AG04450 (cell line): ENCODE measurements at regions of chr5 and their contacts with region 1.

Region 1: DNA sequence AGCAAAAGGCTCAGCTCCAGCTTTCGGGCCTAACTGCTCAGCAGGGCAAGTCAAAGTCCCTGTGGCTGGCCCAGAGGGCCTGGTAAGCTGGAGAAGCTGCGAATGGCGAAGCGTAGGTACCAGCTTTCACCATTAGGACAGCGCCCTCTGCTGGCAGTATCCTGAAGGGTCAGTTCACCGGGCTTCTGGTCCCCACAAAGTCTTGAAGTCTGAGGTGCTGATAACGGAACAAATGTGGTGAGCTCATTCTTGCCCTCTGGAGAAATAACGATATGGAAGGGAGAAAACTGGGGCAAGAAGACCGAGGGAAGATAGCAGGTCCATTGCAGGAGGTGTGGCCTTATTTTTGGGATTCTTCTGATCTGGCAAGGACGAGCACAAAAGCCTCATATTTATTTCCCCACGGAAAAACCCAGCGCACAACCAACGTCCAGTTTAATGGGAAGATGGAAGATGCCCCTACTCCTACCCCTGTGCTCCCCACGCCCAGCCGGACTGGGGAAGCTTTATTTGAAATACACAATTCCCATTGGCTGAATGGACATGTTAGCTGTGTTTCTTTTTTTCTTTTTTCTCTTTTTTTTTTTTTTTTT is 7.2 kb downstream of the SOWAHA start:
- DNase-seq: peak; percentile 85
- H3K4me3 ChIP-seq: no peak overlapping the region
- H3K27ac ChIP-seq: peak overlapping the region; percentile 39
- H3K27me3 ChIP-seq: no peaks in the 10 kb centered on the region
- CTCF ChIP-seq: peak; percentile 95

Region 2: GRCh38 chr5:132506094-132506692 is 314.1 kb before region 1 on chr5:
- CTCF ChIA-PET with region 1: interaction called, 14 read pairs
- POLR2A ChIA-PET with region 1: no interaction called
- DNase-seq: peak; percentile 96
- H3K4me3 ChIP-seq: peak overlapping the region; percentile 20
- H3K27ac ChIP-seq: peak overlapping the region; percentile 98
- H3K27me3 ChIP-seq: no peaks in the 10 kb centered on the region
- CTCF ChIP-seq: peak; percentile 85

Region 3: DNA sequence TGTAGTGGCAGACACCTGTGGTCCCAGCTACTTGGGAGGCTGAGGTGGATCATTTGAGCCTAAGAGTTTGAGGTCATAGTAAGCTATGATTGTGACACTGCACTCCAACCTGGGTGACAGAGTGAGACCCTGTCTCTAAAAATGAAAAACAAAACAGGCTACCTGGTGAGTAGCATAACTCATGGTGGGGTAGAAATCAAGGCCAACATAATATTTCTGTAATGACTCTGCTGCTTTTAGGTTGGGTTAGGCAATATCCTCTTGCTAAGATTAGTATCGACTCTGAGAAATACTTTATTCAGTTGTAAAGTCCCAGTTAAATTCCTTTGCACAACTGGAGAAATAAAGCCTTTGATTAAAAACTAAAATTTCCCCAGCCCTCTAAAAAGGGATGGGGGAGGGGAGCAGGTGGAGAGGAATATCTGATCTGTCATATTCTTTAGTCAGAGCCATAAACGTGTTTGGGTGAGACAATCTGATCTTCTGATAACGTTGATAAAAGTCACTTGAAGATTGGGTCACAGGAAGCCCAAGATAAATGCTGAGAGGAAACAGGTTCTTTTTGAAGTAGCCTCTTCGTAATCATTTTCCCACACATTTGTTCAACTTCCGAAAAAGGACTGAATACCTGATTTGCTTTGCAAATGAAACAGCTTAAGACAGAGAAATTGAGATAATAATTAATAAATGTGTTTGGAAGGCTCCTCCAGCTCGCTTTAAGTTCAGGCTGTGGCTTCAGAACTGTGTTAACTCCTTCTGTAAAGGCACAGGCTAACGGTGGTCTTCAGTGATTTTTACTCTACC is 131.5 kb before region 1 on chr5:
- CTCF ChIA-PET with region 1: interaction called, 13 read pairs
- POLR2A ChIA-PET with region 1: no interaction called
- DNase-seq: no peak
- H3K4me3 ChIP-seq: no peak overlapping the region
- H3K27ac ChIP-seq: no peak overlapping the region
- H3K27me3 ChIP-seq: no peaks in the 10 kb centered on the region
- CTCF ChIP-seq: no peak

Region 4: DNA sequence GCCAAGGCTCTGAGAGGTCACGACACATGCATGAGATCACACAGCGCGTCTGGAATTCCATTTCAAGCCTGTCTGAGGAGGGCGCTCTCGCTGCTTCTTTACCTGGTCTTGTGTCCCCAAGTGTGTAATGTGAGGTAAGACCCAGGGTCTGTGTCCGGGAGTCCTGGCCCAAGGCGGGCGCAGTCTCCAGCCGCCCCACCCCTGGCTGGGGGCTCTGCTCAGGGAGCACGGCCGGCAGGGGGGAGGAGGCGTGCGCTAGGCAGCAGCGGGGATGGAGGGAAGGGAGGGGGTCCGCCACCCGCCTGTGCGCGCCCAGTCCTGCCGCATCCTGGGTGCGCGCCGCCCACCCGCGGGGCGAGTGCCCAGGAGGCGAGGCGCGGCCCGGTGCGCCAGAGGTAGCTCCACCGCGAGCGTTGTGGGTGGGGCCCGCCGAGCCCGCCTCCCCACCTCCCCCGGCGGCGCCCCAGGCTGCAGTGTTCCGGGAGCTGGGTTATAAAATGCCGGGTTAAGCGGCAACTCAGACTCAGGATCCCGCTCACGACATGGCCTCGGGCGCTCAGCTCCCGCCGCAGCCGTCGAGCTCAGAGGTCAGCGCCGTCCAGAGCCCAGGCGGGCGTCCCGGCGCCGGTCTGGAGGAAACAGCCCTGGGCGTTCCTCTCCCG is 73.2 kb before region 1 on chr5 and contains the start of gene CCNI2:
- CTCF ChIA-PET with region 1: interaction called, 147 read pairs
- POLR2A ChIA-PET with region 1: no interaction called
- DNase-seq: no peak
- H3K4me3 ChIP-seq: peak within 1 kb of the TSS; percentile 35
- H3K27ac ChIP-seq: no peak within 1 kb of the TSS
- H3K27me3 ChIP-seq: peaks cover 46% of the 10 kb centered on the region
- CTCF ChIP-seq: peak; percentile 24; the same call in 1 of the 2 replicates
- polyA plus RNA-seq, gene CCNI2: not detected in 2 replicates

Region 5: GRCh38 chr5:132797651-132798050 is 22.6 kb before region 1 on chr5:
- CTCF ChIA-PET with region 1: interaction called, 54 read pairs
- POLR2A ChIA-PET with region 1: no interaction called
- DNase-seq: no peak
- H3K4me3 ChIP-seq: no peak overlapping the region
- H3K27ac ChIP-seq: no peak overlapping the region
- H3K27me3 ChIP-seq: peaks cover 27% of the 10 kb centered on the region
- CTCF ChIP-seq: no peak

Region 6: DNA sequence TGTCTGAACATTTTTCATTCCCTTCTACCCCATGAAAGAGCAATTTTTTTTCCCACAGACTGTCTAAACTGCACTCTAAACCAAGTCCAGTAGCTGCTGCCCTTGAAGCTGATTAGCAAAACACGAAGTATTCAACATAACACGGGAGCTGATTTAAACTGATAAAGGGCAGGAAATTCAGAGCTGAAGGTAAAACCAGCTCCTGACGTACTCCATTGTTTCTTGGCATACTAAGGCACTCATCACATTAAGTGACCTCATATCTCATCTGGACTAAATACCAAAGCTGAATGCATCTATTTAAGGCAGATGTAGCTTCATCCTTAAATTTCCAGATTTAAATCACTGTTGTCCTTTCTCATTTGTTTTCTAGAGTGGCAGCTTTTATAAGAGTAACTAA is 34.0 kb after region 1 on chr5:
- CTCF ChIA-PET with region 1: interaction called, 13 read pairs
- POLR2A ChIA-PET with region 1: no interaction called
- DNase-seq: no peak
- H3K4me3 ChIP-seq: no peak overlapping the region
- H3K27ac ChIP-seq: no peak overlapping the region
- H3K27me3 ChIP-seq: no peaks in the 10 kb centered on the region
- CTCF ChIP-seq: no peak